ENCODE measurements at regions of chr19 and their contacts with region 1.

Region 1: DNA sequence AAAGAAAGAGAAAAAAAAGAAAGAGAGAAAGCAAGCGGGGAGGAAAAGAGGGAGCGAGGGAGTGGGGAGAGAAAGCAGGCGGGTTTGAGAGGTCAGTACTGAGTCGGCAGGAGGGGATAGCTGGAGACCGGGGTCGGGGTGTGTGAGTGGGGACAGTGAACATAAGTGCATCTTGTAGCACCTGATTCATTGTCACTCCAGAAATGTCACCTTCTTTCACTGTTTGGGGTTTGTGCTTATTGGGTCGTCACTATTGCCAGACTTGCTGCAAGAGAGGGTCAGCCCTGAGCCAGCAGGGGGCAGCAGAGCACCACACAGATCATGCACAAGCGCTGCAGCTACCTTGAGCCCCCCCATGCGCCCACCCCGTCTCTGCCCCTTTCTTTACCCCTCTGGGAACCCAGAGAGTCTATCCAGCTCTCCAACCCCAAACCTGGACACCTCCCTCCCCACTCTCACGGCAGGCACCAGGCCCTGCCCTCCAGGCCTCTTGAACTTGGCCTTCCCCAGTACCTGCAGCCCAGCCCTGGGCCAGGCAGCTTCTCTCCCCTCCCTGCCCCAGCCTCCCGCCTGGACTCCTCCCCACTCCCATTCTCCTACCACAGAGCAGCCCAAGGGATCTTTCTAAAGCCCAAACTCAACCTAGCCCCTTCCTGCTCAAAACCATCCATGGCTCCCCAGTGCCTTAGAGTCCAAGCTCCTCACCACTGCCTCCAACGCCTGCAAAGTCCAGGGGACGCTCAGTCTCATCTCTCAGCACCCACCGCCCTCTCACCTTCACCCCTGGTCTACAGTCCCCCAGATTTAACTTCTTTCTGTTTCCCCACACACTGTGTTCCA is 9.7 kb upstream of the CEACAM16 start:
- DNase-seq: peak; percentile 78
- H3K4me3 ChIP-seq: no peak overlapping the region; a peak in 1 of 4 replicates
- H3K27ac ChIP-seq: no peak overlapping the region
- H3K4me1 ChIP-seq: peaks cover 0 to 16% of the 10 kb centered on the region in 2 experiments; a peak in 3 of 4 replicates
- H3K27me3 ChIP-seq: no peaks in the 10 kb centered on the region
- CTCF ChIP-seq: peak; percentile 92
- EP300 ChIP-seq: no peak
- RAD21 ChIP-seq: peak; percentile 78

Region 2: DNA sequence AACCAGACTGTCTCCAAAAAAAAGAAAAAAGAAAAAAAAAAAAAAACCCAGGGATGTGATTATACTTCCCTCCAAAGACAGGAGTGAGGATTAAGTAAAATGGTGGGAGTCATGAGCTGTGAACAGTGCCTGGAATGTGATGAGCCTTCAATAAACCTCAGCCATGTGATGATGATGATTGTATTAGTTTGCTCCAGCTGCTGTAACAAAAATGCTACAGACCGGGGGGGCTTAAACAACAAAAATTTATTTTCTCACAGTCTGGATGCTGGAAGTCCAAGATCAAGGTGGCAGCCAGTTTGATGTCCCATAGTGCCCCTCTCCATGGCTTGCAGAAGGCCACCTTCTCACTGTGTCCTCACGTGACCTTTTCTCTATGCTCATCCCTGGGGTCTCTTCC is 54.5 kb before region 1 on chr19:
- CTCF ChIA-PET with region 1: no interaction called
- POLR2A ChIA-PET with region 1: no interaction called
- DNase-seq: no peak
- H3K4me3 ChIP-seq: no peak overlapping the region
- H3K27ac ChIP-seq: no peak overlapping the region
- H3K4me1 ChIP-seq: peaks cover 0 to 8% of the 10 kb centered on the region in 2 experiments; a peak in 2 of 4 replicates
- H3K27me3 ChIP-seq: no peaks in the 10 kb centered on the region
- CTCF ChIP-seq: no peak
- EP300 ChIP-seq: no peak
- RAD21 ChIP-seq: no peak

Region 3: DNA sequence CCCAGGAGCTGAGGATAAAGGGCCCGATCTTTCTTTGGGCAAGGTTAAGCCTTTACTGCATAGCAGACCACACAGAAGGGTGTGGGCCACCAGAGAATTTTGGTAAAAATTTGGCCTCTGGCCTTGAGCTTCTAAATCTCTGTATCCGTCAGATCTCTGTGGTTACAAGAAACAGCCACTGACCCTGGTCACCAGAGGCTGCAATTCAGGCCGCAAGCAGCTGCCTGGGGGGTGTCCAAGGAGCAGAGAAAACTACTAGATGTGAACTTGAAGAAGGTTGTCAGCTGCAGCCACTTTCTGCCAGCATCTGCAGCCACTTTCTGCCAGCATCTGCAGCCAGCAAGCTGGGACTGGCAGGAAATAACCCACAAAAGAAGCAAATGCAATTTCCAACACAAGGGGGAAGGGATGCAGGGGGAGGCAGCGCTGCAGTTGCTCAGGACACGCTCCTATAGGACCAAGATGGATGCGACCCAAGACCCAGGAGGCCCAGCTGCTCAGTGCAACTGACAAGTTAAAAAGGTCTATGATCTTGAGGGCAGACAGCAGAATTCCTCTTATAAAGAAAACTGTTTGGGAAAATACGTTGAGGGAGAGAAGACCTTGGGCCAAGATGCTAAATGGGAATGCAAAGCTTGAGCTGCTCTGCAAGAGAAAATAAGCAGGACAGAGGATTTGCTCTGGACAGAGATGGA is 26.4 kb before region 1 on chr19:
- CTCF ChIA-PET with region 1: interaction called, 18 read pairs
- POLR2A ChIA-PET with region 1: no interaction called
- DNase-seq: no peak
- H3K4me3 ChIP-seq: no peak overlapping the region
- H3K27ac ChIP-seq: no peak overlapping the region
- H3K4me1 ChIP-seq: no peaks in the 10 kb centered on the region
- H3K27me3 ChIP-seq: no peaks in the 10 kb centered on the region
- CTCF ChIP-seq: no peak
- EP300 ChIP-seq: no peak
- RAD21 ChIP-seq: no peak

Region 4: GRCh38 chr19:44675521-44675920 is 13.8 kb before region 1 on chr19:
- CTCF ChIA-PET with region 1: interaction called, 19 read pairs
- POLR2A ChIA-PET with region 1: no interaction called
- DNase-seq: no peak
- H3K4me3 ChIP-seq: no peak overlapping the region
- H3K27ac ChIP-seq: no peak overlapping the region
- H3K4me1 ChIP-seq: no peaks in the 10 kb centered on the region
- H3K27me3 ChIP-seq: no peaks in the 10 kb centered on the region
- CTCF ChIP-seq: no peak
- EP300 ChIP-seq: no peak
- RAD21 ChIP-seq: no peak

Region 5: GRCh38 chr19:44702551-44703176 is 13.4 kb after region 1 on chr19:
- CTCF ChIA-PET with region 1: interaction called, 20 read pairs
- POLR2A ChIA-PET with region 1: no interaction called
- DNase-seq: peak; percentile 52
- H3K4me3 ChIP-seq: no peak overlapping the region
- H3K27ac ChIP-seq: no peak overlapping the region
- H3K4me1 ChIP-seq: no peaks in the 10 kb centered on the region
- H3K27me3 ChIP-seq: no peaks in the 10 kb centered on the region
- CTCF ChIP-seq: no peak
- EP300 ChIP-seq: no peak
- RAD21 ChIP-seq: no peak

Region 6: DNA sequence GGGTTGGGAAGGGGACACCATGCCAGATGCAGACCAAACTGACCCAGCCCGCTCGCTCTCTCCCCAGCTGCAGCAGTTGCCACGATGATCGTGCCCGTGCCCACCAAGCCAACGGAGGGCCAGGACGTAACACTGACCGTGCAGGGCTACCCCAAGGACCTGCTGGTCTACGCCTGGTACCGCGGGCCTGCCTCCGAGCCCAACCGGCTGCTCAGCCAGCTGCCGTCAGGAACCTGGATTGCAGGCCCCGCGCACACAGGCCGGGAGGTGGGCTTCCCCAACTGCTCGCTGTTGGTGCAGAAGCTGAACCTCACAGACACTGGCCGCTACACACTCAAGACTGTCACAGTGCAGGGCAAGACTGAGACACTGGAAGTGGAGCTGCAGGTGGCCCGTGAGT is 18.5 kb after region 1 on chr19:
- CTCF ChIA-PET with region 1: interaction called, 20 read pairs
- POLR2A ChIA-PET with region 1: no interaction called
- DNase-seq: no peak
- H3K4me3 ChIP-seq: no peak overlapping the region
- H3K27ac ChIP-seq: no peak overlapping the region
- H3K4me1 ChIP-seq: no peaks in the 10 kb centered on the region
- H3K27me3 ChIP-seq: no peaks in the 10 kb centered on the region
- CTCF ChIP-seq: no peak
- EP300 ChIP-seq: no peak
- RAD21 ChIP-seq: no peak

Region 7: GRCh38 chr19:44712864-44713515 is 23.7 kb after region 1 on chr19:
- CTCF ChIA-PET with region 1: interaction called, 20 read pairs
- POLR2A ChIA-PET with region 1: no interaction called
- DNase-seq: no peak
- H3K4me3 ChIP-seq: no peak overlapping the region
- H3K27ac ChIP-seq: no peak overlapping the region
- H3K4me1 ChIP-seq: no peaks in the 10 kb centered on the region
- H3K27me3 ChIP-seq: no peaks in the 10 kb centered on the region
- CTCF ChIP-seq: no peak
- EP300 ChIP-seq: no peak
- RAD21 ChIP-seq: no peak

Region 8: GRCh38 chr19:44876930-44877535 is 187.8 kb after region 1 on chr19:
- CTCF ChIA-PET with region 1: no interaction called
- POLR2A ChIA-PET with region 1: no interaction called
- DNase-seq: no peak
- H3K4me3 ChIP-seq: no peak overlapping the region
- H3K27ac ChIP-seq: peak overlapping the region in 1 of 2 experiments; percentile 66; a peak in 2 of 4 replicates
- H3K4me1 ChIP-seq: peaks cover 0 to 13% of the 10 kb centered on the region in 2 experiments; a peak in 3 of 4 replicates
- H3K27me3 ChIP-seq: no peaks in the 10 kb centered on the region
- CTCF ChIP-seq: no peak
- EP300 ChIP-seq: no peak
- RAD21 ChIP-seq: no peak

Measured in SK-N-SH (cell line).